Caco-2 (cell line): ENCODE measurements at regions of chr20 and their contacts with region 1.

Region 1: DNA sequence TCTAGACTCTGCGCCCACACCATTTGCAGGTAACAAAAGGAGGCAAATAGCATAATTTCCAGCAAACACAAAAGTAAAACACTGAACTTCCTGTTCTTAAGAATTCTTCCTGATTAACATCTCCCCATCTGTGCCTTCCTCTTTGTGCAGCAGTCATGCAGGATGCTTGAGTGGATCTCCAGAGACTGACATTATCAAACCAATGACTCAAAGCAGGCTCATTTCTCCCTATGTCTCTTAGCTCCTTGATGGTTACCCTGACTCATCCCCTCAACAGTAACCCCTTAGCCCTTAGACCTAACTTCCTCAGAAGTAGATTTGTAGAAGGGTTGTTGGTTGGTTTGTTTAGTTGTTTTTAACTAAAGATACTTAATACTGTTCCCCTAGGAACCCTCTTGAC is 137.0 kb upstream of the RIN2 start:
- DNase-seq: no peak
- H3K4me3 ChIP-seq: no peak overlapping the region
- H3K4me3 Mint-ChIP-seq: no peak overlapping the region
- H3K27ac Mint-ChIP-seq: no peak overlapping the region
- H3K4me1 ChIP-seq: peaks cover 14% of the 10 kb centered on the region
- H3K4me1 Mint-ChIP-seq: peaks cover 26% of the 10 kb centered on the region
- H3K27me3 ChIP-seq: no peaks in the 10 kb centered on the region
- H3K27me3 Mint-ChIP-seq: no peaks in the 10 kb centered on the region
- CTCF ChIP-seq: no peak

Region 2: GRCh38 chr20:19392344-19393130 is 228.5 kb before region 1 on chr20:
- CTCF ChIA-PET with region 1: no interaction called
- POLR2A ChIA-PET with region 1: no interaction called
- intact Hi-C with region 1: no loop called
- DNase-seq: no peak
- H3K4me3 ChIP-seq: no peak overlapping the region
- H3K4me3 Mint-ChIP-seq: no peak overlapping the region
- H3K27ac Mint-ChIP-seq: no peak overlapping the region
- H3K4me1 ChIP-seq: no peaks in the 10 kb centered on the region
- H3K4me1 Mint-ChIP-seq: no peaks in the 10 kb centered on the region
- H3K27me3 ChIP-seq: no peaks in the 10 kb centered on the region
- H3K27me3 Mint-ChIP-seq: peaks cover 5% of the 10 kb centered on the region
- CTCF ChIP-seq: no peak

Region 3: DNA sequence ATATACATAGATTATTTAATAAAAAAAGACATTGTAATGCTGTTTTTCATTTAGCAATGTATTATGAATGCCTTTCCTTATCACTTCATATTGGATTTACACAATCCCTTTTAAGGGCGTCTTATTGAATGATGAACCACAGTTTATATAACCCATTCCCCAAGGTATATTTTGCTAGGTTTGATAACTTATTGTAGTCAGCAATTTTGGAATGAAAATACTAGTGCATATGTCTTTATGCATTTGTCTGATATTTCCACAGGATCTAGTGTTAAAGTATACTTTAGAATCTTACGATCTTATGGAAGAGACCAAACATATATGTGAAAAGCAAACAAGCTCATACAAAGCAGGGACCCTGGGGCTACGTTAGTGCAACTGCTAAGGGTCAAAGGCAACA is 43.4 kb before region 1 on chr20:
- CTCF ChIA-PET with region 1: no interaction called
- POLR2A ChIA-PET with region 1: no interaction called
- intact Hi-C with region 1: no loop called
- DNase-seq: no peak
- H3K4me3 ChIP-seq: no peak overlapping the region
- H3K4me3 Mint-ChIP-seq: no peak overlapping the region
- H3K27ac Mint-ChIP-seq: no peak overlapping the region
- H3K4me1 ChIP-seq: no peaks in the 10 kb centered on the region
- H3K4me1 Mint-ChIP-seq: no peaks in the 10 kb centered on the region
- H3K27me3 ChIP-seq: no peaks in the 10 kb centered on the region
- H3K27me3 Mint-ChIP-seq: peaks cover 16% of the 10 kb centered on the region
- CTCF ChIP-seq: no peak

Region 4: DNA sequence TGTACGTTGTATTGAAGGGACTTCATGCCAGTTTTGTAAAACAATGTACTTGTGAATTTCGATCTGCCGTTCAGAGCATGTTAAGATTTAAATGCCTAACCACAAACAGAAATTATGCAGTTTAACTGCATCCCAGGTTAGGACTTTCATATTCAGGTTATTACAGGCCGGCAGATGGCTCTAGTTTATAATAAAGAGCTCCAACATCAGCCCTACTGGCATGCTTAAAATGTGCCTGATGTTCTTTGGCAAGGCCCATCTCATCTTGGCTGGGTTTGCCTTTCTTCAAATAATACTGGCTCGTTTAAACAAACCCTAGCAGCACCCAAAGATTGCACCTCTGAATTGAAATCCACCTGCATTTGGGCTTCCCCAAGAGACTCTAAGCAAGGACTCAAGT is 32.3 kb before region 1 on chr20:
- CTCF ChIA-PET with region 1: interaction called, 9 read pairs
- POLR2A ChIA-PET with region 1: no interaction called
- intact Hi-C with region 1: loop called (anchors 2 kb)
- DNase-seq: no peak
- H3K4me3 ChIP-seq: no peak overlapping the region
- H3K4me3 Mint-ChIP-seq: no peak overlapping the region
- H3K27ac Mint-ChIP-seq: no peak overlapping the region
- H3K4me1 ChIP-seq: no peaks in the 10 kb centered on the region
- H3K4me1 Mint-ChIP-seq: no peaks in the 10 kb centered on the region
- H3K27me3 ChIP-seq: no peaks in the 10 kb centered on the region; the same call in 1 of the 2 replicates
- H3K27me3 Mint-ChIP-seq: peaks cover 4% of the 10 kb centered on the region
- CTCF ChIP-seq: peak in 1 of 2 experiments; percentile 41